ENCODE measurements at regions of chr10 and their contacts with region 1.

Region 1: GRCh38 chr10:13440185-13441061 is 88.4 kb downstream of the BEND7 start:
- DNase-seq: peak; percentile 78
- ATAC-seq: peak; percentile 89
- H3K4me3 ChIP-seq: peak overlapping the region in 4 of 5 experiments; percentile 26 to 58 (median 42)
- H3K4me3 Mint-ChIP-seq: peak overlapping the region; percentile 65
- H3K27ac ChIP-seq: no peak overlapping the region
- H3K27ac Mint-ChIP-seq: no peak overlapping the region
- H3K4me1 ChIP-seq: peaks cover 13 to 15% of the 10 kb centered on the region in 2 donors
- H3K4me1 Mint-ChIP-seq: peaks cover 13% of the 10 kb centered on the region
- H3K27me3 ChIP-seq: peaks cover 0 to 33% (median 27%) of the 10 kb centered on the region in 4 experiments
- H3K27me3 Mint-ChIP-seq: peaks cover 49% of the 10 kb centered on the region
- CTCF ChIP-seq: peak; percentile 97

Region 2: GRCh38 chr10:13160934-13161856 is 279.2 kb before region 1 on chr10 and contains the start of gene MCM10:
- CTCF ChIA-PET with region 1: interaction called, 3 read pairs
- POLR2A ChIA-PET with region 1: no interaction called
- intact Hi-C with region 1: loop called (anchors 1 kb)
- DNase-seq: peak; percentile 97
- ATAC-seq: peak; percentile 100
- H3K4me3 ChIP-seq: peak within 1 kb of the TSS; percentile 34 to 82 (median 63)
- H3K4me3 Mint-ChIP-seq: peak within 1 kb of the TSS; percentile 93
- H3K27ac ChIP-seq: peak within 1 kb of the TSS in 1 of 2 donors; percentile 54
- H3K27ac Mint-ChIP-seq: peak within 1 kb of the TSS; percentile 81
- H3K4me1 ChIP-seq: peaks cover 10 to 12% of the 10 kb centered on the region in 2 donors
- H3K4me1 Mint-ChIP-seq: peaks cover 14% of the 10 kb centered on the region
- H3K27me3 ChIP-seq: no peaks in the 10 kb centered on the region
- H3K27me3 Mint-ChIP-seq: no peaks in the 10 kb centered on the region
- CTCF ChIP-seq: peak; percentile 89
- total RNA-seq, gene MCM10: 0.15 and 0.42 TPM in 2 replicates

Region 3: GRCh38 chr10:13371897-13372470 is 68.4 kb before region 1 on chr10:
- CTCF ChIA-PET with region 1: interaction called, 68 read pairs
- POLR2A ChIA-PET with region 1: no interaction called
- intact Hi-C with region 1: no loop called
- DNase-seq: peak; percentile 84
- ATAC-seq: peak; percentile 96
- H3K4me3 ChIP-seq: no peak overlapping the region
- H3K4me3 Mint-ChIP-seq: no peak overlapping the region
- H3K27ac ChIP-seq: no peak overlapping the region
- H3K27ac Mint-ChIP-seq: no peak overlapping the region
- H3K4me1 ChIP-seq: no peaks in the 10 kb centered on the region
- H3K4me1 Mint-ChIP-seq: no peaks in the 10 kb centered on the region
- H3K27me3 ChIP-seq: no peaks in the 10 kb centered on the region
- H3K27me3 Mint-ChIP-seq: peaks cover 4% of the 10 kb centered on the region
- CTCF ChIP-seq: peak; percentile 95

Region 4: GRCh38 chr10:13483951-13484350 is 43.5 kb after region 1 on chr10:
- CTCF ChIA-PET with region 1: interaction called, 4 read pairs
- POLR2A ChIA-PET with region 1: no interaction called
- intact Hi-C with region 1: loop called (anchors 1 kb)
- DNase-seq: peak; percentile 73
- ATAC-seq: peak; percentile 91
- H3K4me3 ChIP-seq: peak overlapping the region in 1 of 5 experiments; percentile 32
- H3K4me3 Mint-ChIP-seq: peak overlapping the region; percentile 52
- H3K27ac ChIP-seq: peak overlapping the region; percentile 41 to 49
- H3K27ac Mint-ChIP-seq: peak overlapping the region; percentile 62
- H3K4me1 ChIP-seq: peaks cover 14 to 22% of the 10 kb centered on the region in 2 donors
- H3K4me1 Mint-ChIP-seq: peaks cover 26% of the 10 kb centered on the region
- H3K27me3 ChIP-seq: no peaks in the 10 kb centered on the region
- H3K27me3 Mint-ChIP-seq: no peaks in the 10 kb centered on the region
- CTCF ChIP-seq: no peak

Region 5: DNA sequence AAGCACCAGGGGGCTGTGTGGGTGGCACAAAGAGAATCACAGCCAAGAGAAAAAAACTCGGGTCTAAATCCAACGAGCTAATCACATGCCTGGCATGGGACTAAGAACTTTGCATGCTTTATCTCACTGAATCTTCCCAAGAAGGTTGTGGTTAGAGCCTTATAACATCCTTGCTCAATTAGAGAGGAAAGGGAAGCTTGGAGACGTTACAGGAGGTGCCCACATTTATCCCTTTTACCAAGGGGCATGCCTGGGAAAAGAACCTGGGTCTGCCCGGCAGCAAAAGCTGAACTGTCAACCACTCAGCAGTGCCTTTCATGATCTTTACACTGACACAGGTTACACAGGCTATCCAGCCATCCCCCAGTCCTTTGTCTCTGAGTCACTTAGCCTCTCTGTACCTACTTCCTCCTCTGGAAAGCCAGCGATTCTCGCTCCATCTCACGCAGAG is 336.5 kb after region 1 on chr10:
- CTCF ChIA-PET with region 1: no interaction called
- POLR2A ChIA-PET with region 1: no interaction called
- intact Hi-C with region 1: loop called (anchors 5 kb)
- DNase-seq: no peak
- ATAC-seq: peak; percentile 67
- H3K4me3 ChIP-seq: no peak overlapping the region
- H3K4me3 Mint-ChIP-seq: peak overlapping the region; percentile 26
- H3K27ac ChIP-seq: no peak overlapping the region
- H3K27ac Mint-ChIP-seq: no peak overlapping the region
- H3K4me1 ChIP-seq: peaks cover 10 to 13% of the 10 kb centered on the region in 2 donors
- H3K4me1 Mint-ChIP-seq: peaks cover 42% of the 10 kb centered on the region
- H3K27me3 ChIP-seq: peaks cover 0 to 12% (median 3%) of the 10 kb centered on the region in 4 experiments
- H3K27me3 Mint-ChIP-seq: peaks cover 25% of the 10 kb centered on the region
- CTCF ChIP-seq: no peak

Region 6: GRCh38 chr10:14936584-14936983 is 1496.2 kb after region 1 on chr10:
- CTCF ChIA-PET with region 1: no interaction called
- POLR2A ChIA-PET with region 1: no interaction called
- intact Hi-C with region 1: no loop called
- DNase-seq: no peak
- ATAC-seq: no peak
- H3K4me3 ChIP-seq: no peak overlapping the region
- H3K4me3 Mint-ChIP-seq: no peak overlapping the region
- H3K27ac ChIP-seq: no peak overlapping the region
- H3K27ac Mint-ChIP-seq: no peak overlapping the region
- H3K4me1 ChIP-seq: peaks cover 0 to 6% of the 10 kb centered on the region in 2 donors
- H3K4me1 Mint-ChIP-seq: no peaks in the 10 kb centered on the region
- H3K27me3 ChIP-seq: no peaks in the 10 kb centered on the region
- H3K27me3 Mint-ChIP-seq: no peaks in the 10 kb centered on the region
- CTCF ChIP-seq: no peak

Measured in B cell (primary cell).